ENCODE measurements at regions of chr1 and their contacts with region 1.

Region 1: DNA sequence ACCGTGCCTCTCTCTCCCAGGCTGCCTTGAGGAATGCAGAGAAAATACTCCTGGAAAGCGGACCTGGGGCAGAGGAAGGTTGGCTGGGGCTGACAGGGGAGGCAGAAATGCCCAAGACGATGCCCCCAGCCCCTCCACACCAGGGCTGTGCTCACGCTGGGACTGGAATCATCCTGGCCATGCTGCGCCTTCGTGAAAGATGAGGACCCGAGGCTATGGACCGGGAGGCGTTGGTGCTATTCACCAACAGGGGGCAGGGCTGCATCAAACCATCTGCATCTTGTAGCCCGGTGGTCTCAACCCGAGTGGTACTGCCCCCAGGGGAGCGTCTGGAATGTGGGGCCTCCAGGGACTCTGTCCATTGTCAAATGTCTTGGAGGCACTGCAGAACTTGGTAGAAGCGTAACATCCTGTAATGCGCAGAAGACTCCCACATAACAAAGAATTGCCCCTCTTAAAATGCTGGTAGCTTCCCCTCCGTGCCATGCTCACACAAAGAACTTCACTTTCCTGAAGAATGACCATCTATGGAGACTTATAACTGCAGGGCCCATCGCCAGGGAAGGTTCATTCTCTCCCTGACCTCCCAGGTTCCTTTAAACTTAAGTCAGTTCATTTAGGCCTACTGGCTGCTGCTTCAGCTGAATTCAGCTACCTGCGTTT is 251.2 kb downstream of the RRAGC start:
- DNase-seq: peak in 4 of 14 experiments; percentile 1 to 23 (median 16)
- ATAC-seq: no peak
- H3K4me3 ChIP-seq: no peak overlapping the region
- H3K4me3 Mint-ChIP-seq: no peak overlapping the region
- H3K27ac ChIP-seq: no peak overlapping the region
- H3K27ac Mint-ChIP-seq: no peak overlapping the region
- H3K4me1 ChIP-seq: no peaks in the 10 kb centered on the region
- H3K4me1 Mint-ChIP-seq: no peaks in the 10 kb centered on the region
- H3K27me3 ChIP-seq: peaks cover 0 to 4% of the 10 kb centered on the region in 2 experiments
- H3K27me3 Mint-ChIP-seq: peaks cover 27% of the 10 kb centered on the region
- CTCF ChIP-seq: peak; percentile 20

Region 2: GRCh38 chr1:39091845-39092645 is 483.7 kb after region 1 on chr1:
- CTCF ChIA-PET with region 1: no interaction called
- POLR2A ChIA-PET with region 1: no interaction called
- intact Hi-C with region 1: loop called in 1 of 2 experiments (anchors 5 kb)
- DNase-seq: peak in 13 of 14 experiments; percentile 37 to 79 (median 53)
- ATAC-seq: peak; percentile 78
- H3K4me3 ChIP-seq: no peak overlapping the region
- H3K4me3 Mint-ChIP-seq: no peak overlapping the region
- H3K27ac ChIP-seq: no peak overlapping the region
- H3K27ac Mint-ChIP-seq: no peak overlapping the region
- H3K4me1 ChIP-seq: peaks cover 18% of the 10 kb centered on the region
- H3K4me1 Mint-ChIP-seq: peaks cover 10% of the 10 kb centered on the region
- H3K27me3 ChIP-seq: no peaks in the 10 kb centered on the region
- H3K27me3 Mint-ChIP-seq: no peaks in the 10 kb centered on the region
- CTCF ChIP-seq: peak; percentile 78

Measured in CD4-positive, alpha-beta T cell (primary cell).